Mammary epithelial cell (primary cell): ENCODE measurements at regions of chr5 and their contacts with region 1.

Region 1: DNA sequence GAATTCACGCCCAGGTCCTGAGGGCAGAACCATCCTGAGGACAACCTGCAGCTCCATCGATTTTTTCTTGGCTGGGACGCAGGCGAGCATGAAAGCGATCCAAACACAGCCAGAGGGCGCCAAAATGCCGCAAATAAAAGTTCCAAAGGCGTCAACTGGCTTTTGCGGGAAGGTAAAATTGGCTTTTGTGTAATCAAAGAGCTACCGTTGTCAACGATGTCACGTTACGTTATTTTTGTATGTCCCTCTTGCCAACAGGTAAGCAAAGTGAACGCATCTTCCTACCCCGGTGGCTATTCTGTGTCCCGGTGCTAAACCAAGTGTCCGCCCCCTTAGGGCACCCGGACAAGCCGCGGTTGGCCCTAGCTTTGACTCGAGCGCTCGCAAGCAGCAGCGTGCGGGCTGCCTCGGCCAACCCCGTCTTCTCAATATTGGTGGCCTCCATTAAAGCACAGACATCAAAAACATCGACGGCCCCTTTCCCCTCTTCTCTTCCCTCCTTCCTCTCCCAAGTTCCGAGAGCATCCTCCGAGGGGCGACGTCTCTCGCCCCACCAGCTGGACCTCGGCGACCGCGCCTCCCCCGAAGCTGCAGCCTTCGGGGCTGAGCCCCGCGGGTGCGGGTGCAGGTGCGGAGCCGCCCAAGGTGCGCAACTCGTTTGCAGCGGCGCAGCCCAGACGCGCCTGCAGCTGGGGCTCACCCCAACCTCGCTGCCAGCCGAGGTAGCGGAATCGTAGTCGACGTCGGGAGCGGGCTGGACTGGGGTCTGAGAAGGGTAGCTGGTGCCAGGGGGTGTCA is 1.1 kb upstream of the BASP1 start:
- DNase-seq: peak; percentile 79
- H3K4me3 ChIP-seq: peak overlapping the region; percentile 9 to 67 (median 30)
- H3K27ac ChIP-seq: no peak overlapping the region
- H3K4me1 ChIP-seq: peaks cover 17% of the 10 kb centered on the region
- H3K27me3 ChIP-seq: no peaks in the 10 kb centered on the region
- CTCF ChIP-seq: peak; percentile 84 to 86

Region 2: GRCh38 chr5:17248999-17249634 is 32.7 kb after region 1 on chr5:
- CTCF ChIA-PET with region 1: no interaction called
- dilution Hi-C with region 1: no loop called
- in situ Hi-C with region 1: no loop called
- intact Hi-C with region 1: loop called (anchors 1 kb)
- DNase-seq: peak; percentile 96
- H3K4me3 ChIP-seq: no peak overlapping the region
- H3K27ac ChIP-seq: peak overlapping the region; percentile 45
- H3K4me1 ChIP-seq: peaks cover 39% of the 10 kb centered on the region
- H3K27me3 ChIP-seq: no peaks in the 10 kb centered on the region
- CTCF ChIP-seq: peak in 1 of 2 donors; percentile 30

Region 3: GRCh38 chr5:17694922-17695321 is 478.5 kb after region 1 on chr5:
- CTCF ChIA-PET with region 1: no interaction called
- dilution Hi-C with region 1: no loop called
- in situ Hi-C with region 1: no loop called
- intact Hi-C with region 1: loop called (anchors 10 kb)
- DNase-seq: peak; percentile 64
- H3K4me3 ChIP-seq: no peak overlapping the region
- H3K27ac ChIP-seq: peak overlapping the region; percentile 33
- H3K4me1 ChIP-seq: peaks cover 8% of the 10 kb centered on the region
- H3K27me3 ChIP-seq: no peaks in the 10 kb centered on the region
- CTCF ChIP-seq: no peak

Region 4: GRCh38 chr5:18043346-18043745 is 827.0 kb after region 1 on chr5:
- CTCF ChIA-PET with region 1: no interaction called
- dilution Hi-C with region 1: no loop called
- in situ Hi-C with region 1: loop called in 1 of 2 experiments (anchors 25 kb)
- intact Hi-C with region 1: loop called (anchors 1 kb)
- DNase-seq: peak; percentile 64
- H3K4me3 ChIP-seq: no peak overlapping the region
- H3K27ac ChIP-seq: no peak overlapping the region
- H3K4me1 ChIP-seq: no peaks in the 10 kb centered on the region
- H3K27me3 ChIP-seq: no peaks in the 10 kb centered on the region
- CTCF ChIP-seq: peak in 1 of 2 donors; percentile 59

Region 5: DNA sequence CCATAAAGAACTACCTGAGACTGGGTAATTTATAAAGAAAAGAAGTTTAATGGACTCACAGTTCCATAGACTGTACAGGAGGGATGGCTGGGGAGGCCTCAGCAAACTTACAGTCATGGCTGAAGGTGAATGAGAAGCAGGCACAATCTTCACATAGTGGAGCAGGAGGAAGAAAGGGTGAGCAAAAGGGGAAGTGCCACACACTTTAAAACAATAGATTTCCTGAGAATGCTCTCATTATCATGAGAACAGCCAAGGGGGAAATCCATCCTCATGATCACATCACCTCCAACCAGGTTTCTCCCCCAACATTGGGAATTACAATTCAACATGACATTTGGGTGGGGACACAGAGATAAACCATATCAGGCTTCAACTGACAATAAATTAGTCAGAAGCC is 1082.8 kb after region 1 on chr5:
- CTCF ChIA-PET with region 1: interaction called, 6 read pairs
- dilution Hi-C with region 1: loop called (anchors 25 kb)
- in situ Hi-C with region 1: loop called (anchors 10 kb)
- intact Hi-C with region 1: no loop called
- DNase-seq: no peak
- H3K4me3 ChIP-seq: no peak overlapping the region
- H3K27ac ChIP-seq: no peak overlapping the region
- H3K4me1 ChIP-seq: no peaks in the 10 kb centered on the region
- H3K27me3 ChIP-seq: no peaks in the 10 kb centered on the region
- CTCF ChIP-seq: no peak